OCI-LY7 (cell line): ENCODE measurements at regions of chr17 and their contacts with region 1.

Region 1: DNA sequence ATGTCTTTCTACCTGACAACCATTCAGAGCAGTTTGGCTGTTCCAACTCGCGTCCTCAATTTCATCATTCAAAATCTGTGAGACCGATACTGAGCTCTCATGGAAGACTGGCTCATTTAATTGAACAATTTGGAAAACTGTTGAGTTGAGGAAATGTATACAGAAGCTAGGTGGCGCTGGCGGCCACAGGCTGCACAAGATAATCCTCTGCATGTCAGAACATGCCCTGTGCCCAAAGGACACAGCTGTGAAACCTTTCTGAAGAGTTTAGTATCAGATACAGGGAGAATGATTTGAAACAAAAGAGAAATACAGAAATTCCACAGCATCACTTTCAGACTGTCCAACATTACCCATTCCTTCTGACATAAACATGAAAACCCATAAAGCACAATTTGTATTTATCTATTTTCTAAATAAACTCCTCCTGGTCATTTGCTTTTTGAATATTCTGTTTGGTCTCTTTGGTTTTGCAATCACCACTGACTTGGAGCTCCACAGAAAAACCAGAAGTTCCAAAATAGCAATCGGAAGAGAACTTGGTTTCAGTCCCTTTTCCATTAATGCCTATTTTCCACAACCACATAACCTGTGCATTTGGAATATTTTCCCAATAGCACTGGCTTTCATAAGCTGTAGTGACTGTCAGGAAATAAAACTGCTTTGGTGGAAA is 192.8 kb downstream of the MAP2K6 start:
- DNase-seq: peak; percentile 84
- H3K4me3 ChIP-seq: no peak overlapping the region
- H3K27ac ChIP-seq: peak overlapping the region; percentile 13
- H3K4me1 ChIP-seq: peaks cover 49% of the 10 kb centered on the region
- CTCF ChIP-seq: peak; percentile 100

Region 2: GRCh38 chr17:69581061-69581961 is 26.0 kb before region 1 on chr17:
- CTCF ChIA-PET with region 1: interaction called, 10 read pairs
- POLR2A ChIA-PET with region 1: interaction called, 31 read pairs
- intact Hi-C with region 1: loop called (anchors 1 kb)
- DNase-seq: peak; percentile 100
- H3K4me3 ChIP-seq: peak overlapping the region; percentile 47
- H3K27ac ChIP-seq: peak overlapping the region; percentile 94
- H3K4me1 ChIP-seq: peaks cover 93% of the 10 kb centered on the region
- CTCF ChIP-seq: no peak

Region 3: DNA sequence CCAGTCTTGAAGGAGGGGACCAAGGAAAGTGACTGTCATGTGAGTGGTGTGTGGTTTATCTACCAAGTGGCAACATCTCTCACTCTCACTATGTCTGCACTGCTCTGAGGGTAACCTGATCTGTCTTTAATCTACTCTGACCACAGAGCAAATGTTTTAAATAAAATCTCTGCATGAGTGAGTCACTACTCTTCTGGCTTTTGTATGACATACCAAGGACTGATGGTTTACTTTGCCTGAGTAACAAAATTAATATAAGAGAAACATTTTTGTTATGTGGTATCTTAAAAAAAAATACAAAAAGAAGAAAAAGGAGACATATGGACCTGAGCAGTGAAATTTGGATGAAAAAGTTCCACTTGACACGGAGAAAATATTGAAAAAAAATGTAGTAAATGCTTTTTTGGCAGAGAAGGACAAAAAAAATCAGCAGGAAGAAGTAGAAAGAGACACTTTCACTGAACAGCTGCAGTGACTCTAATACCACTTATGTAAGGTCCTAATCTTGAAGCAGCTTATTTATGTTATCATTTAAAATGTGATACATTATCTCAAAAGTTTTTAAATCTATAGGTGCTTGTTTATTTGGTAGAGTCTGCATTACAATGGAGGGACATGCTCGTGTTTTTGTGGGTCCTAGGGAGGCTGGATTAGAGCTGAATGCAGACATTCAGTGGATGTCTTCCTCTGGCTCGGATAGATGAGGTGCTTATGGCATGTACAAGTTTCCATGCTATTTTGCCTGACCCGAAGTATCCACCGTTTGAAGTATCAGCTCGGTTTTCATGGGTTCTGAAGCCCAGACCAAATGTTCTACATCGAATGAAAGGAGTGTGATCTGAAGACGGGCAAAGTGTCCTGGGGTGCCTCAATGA is 47.9 kb after region 1 on chr17:
- CTCF ChIA-PET with region 1: interaction called, 3 read pairs
- POLR2A ChIA-PET with region 1: interaction called, 4 read pairs
- intact Hi-C with region 1: loop called (anchors 2 kb)
- DNase-seq: peak; percentile 84
- H3K4me3 ChIP-seq: no peak overlapping the region
- H3K27ac ChIP-seq: peak overlapping the region; percentile 65
- H3K4me1 ChIP-seq: peaks cover 21% of the 10 kb centered on the region
- CTCF ChIP-seq: no peak

Region 4: GRCh38 chr17:69733171-69734012 is 126.1 kb after region 1 on chr17:
- CTCF ChIA-PET with region 1: no interaction called
- POLR2A ChIA-PET with region 1: no interaction called
- intact Hi-C with region 1: no loop called
- DNase-seq: peak; percentile 30
- H3K4me3 ChIP-seq: no peak overlapping the region
- H3K27ac ChIP-seq: no peak overlapping the region
- H3K4me1 ChIP-seq: no peaks in the 10 kb centered on the region
- CTCF ChIP-seq: no peak

Region 5: DNA sequence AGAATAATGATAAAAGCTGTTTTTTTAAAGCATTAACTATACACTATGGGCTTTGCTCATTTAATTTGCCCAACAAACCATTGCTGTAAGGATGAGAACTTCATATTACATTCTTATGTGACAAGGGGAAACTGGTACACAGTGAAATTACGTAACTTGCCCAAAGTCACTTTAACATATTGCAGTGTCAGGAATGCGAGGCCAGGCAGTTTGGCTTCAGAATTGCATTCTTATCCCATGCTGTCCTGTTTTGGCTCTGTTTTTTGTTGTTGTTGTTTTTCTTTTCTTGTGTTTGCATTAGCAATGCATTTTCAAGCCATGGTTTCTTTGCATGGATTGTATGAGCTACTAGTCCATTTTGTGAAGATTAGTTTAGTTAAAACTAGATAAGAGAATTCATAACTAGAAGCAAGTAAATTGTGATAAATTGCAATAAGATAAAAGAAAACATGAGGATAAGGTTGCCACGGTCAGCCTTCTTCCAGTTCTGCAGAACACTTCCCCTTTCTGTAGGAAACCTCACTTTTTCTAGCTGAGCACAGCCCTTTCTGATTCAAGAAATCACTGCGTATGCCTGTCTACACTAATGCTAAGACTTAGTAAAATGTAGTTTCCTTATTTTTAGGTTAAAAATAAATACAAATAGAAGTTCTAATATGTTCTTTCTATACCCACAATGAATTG is 246.4 kb after region 1 on chr17:
- CTCF ChIA-PET with region 1: no interaction called
- POLR2A ChIA-PET with region 1: interaction called, 3 read pairs
- intact Hi-C with region 1: loop called (anchors 2 kb)
- DNase-seq: no peak
- H3K4me3 ChIP-seq: no peak overlapping the region
- H3K27ac ChIP-seq: no peak overlapping the region
- H3K4me1 ChIP-seq: no peaks in the 10 kb centered on the region
- CTCF ChIP-seq: no peak